ENCODE measurements at regions of chr5 and their contacts with region 1.

Region 1: DNA sequence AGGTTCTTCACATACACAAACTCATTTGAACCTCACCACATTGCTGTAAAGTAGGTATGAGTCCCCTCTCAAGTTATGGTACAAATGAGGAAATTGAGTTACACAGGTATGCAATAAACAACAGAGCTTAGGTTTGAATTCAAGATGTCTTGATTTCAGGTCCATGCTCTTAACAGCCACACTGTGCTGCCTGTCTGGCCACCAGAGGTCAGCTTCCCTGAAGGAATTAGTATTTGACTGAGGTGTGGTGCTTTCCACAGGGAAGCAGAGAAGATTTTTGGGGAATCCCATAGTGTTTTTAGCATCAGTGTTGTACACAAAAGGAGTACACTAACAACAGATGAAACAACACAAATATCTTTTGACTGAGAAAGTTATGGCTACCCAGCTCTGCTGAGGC is 94.4 kb upstream of the ITGA1 start:
- DNase-seq: peak; percentile 35
- H3K4me3 ChIP-seq: no peak overlapping the region
- H3K27ac ChIP-seq: no peak overlapping the region
- H3K4me1 ChIP-seq: no peaks in the 10 kb centered on the region
- H3K27me3 ChIP-seq: no peaks in the 10 kb centered on the region
- CTCF ChIP-seq: peak; percentile 53

Region 2: GRCh38 chr5:52915176-52915875 is 222.0 kb after region 1 on chr5:
- intact Hi-C with region 1: loop called (anchors 5 kb)
- DNase-seq: peak; percentile 57
- H3K4me3 ChIP-seq: no peak overlapping the region
- H3K27ac ChIP-seq: no peak overlapping the region
- H3K4me1 ChIP-seq: no peaks in the 10 kb centered on the region
- H3K27me3 ChIP-seq: no peaks in the 10 kb centered on the region
- CTCF ChIP-seq: peak; percentile 77

Measured in colonic mucosa (tissue), 4 donors.